Activated naive CD4-positive, alpha-beta T cell treated with anti-CD3 and anti-CD28 coated beads, Interleukin-2, amount 10 ng/mL, durations not matched to agents 7 days and 5 days (primary cell): ENCODE measurements at regions of chr5 and their contacts with region 1.

Region 1: GRCh38 chr5:14270209-14270702 is 127.1 kb downstream of the TRIO start:
- DNase-seq: no peak
- H3K4me3 Mint-ChIP-seq: no peak overlapping the region
- H3K27ac Mint-ChIP-seq: no peak overlapping the region
- H3K4me1 Mint-ChIP-seq: no peaks in the 10 kb centered on the region
- H3K27me3 Mint-ChIP-seq: peaks cover 10% of the 10 kb centered on the region

Region 2: DNA sequence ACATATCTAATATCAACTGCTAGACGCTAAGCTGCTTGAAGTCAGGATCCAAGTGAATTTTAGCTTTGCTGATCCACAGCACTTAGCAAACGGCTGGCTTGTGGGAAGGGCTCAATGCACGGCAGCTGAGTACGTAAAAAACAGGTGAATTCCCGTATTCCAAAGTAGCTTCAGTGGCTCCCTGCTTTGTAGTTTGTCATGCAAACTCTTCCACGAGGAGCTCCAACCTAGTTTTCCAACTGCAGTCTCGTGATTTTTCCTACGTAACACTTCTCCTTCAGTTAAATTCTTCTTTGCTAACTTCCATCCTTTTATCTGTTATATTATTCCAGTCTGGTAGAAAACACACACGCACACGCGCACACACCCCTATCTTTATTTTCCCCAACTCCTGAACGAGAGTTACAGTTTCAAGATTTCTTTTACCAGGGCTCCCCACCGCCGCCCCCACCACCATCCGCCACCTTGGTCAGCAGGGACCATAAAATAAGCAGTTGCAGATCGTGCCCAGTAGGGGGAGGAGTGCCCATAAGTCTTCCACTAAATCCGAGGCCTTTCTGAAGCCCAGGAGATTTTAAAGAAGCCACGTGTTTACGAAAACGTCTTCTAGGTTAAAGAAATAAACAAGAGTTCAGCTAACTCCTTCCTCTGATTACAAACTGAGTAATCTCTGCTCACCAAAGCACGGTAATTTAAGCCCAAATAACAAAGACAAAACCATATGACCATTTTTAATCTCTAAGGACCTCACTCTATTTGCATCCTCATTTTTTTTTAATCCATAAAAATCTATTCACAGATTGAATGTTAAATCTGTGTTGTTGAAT is 161.9 kb before region 1 on chr5:
- CTCF ChIA-PET with region 1: interaction called, 16 read pairs
- DNase-seq: peak; percentile 47
- H3K4me3 Mint-ChIP-seq: no peak overlapping the region
- H3K27ac Mint-ChIP-seq: no peak overlapping the region
- H3K4me1 Mint-ChIP-seq: peaks cover 17% of the 10 kb centered on the region
- H3K27me3 Mint-ChIP-seq: peaks cover 4% of the 10 kb centered on the region